ENCODE measurements at regions of chr3 and their contacts with region 1.

Region 1: GRCh38 chr3:100400780-100401673 is at the starts of genes LNP1 and TOMM70:
- DNase-seq: peak; percentile 96
- ATAC-seq: peak; percentile 92
- H3K4me3 ChIP-seq: peak within 1 kb of the TSS; percentile 74 to 95 (median 89)
- H3K4me3 Mint-ChIP-seq: peak within 1 kb of the TSS; percentile 95
- H3K27ac ChIP-seq: peak within 1 kb of the TSS; percentile 73 to 84
- H3K27ac Mint-ChIP-seq: peak within 1 kb of the TSS; percentile 93
- H3K4me1 ChIP-seq: peaks cover 18 to 22% of the 10 kb centered on the region in 2 donors
- H3K4me1 Mint-ChIP-seq: peaks cover 49% of the 10 kb centered on the region
- H3K27me3 ChIP-seq: no peaks in the 10 kb centered on the region
- H3K27me3 Mint-ChIP-seq: no peaks in the 10 kb centered on the region
- CTCF ChIP-seq: no peak
- total RNA-seq, gene LNP1: 1.6 and 1.9 TPM in 2 replicates
- total RNA-seq, gene TOMM70: 28.8 and 30.0 TPM in 2 replicates

Region 2: GRCh38 chr3:98593046-98593936 is 1807.7 kb before region 1 on chr3 and contains the start of gene CPOX:
- CTCF ChIA-PET with region 1: no interaction called
- POLR2A ChIA-PET with region 1: no interaction called
- intact Hi-C with region 1: loop called (anchors 5 kb)
- DNase-seq: peak; percentile 79
- ATAC-seq: peak; percentile 93
- H3K4me3 ChIP-seq: peak within 1 kb of the TSS; percentile 63 to 90 (median 69)
- H3K4me3 Mint-ChIP-seq: peak within 1 kb of the TSS; percentile 98
- H3K27ac ChIP-seq: peak within 1 kb of the TSS; percentile 60 to 76
- H3K27ac Mint-ChIP-seq: peak within 1 kb of the TSS; percentile 87
- H3K4me1 ChIP-seq: peaks cover 9 to 20% of the 10 kb centered on the region in 2 donors
- H3K4me1 Mint-ChIP-seq: peaks cover 26% of the 10 kb centered on the region
- H3K27me3 ChIP-seq: no peaks in the 10 kb centered on the region
- H3K27me3 Mint-ChIP-seq: no peaks in the 10 kb centered on the region
- CTCF ChIP-seq: no peak
- total RNA-seq, gene CPOX: 17.5 and 22.0 TPM in 2 replicates

Region 3: DNA sequence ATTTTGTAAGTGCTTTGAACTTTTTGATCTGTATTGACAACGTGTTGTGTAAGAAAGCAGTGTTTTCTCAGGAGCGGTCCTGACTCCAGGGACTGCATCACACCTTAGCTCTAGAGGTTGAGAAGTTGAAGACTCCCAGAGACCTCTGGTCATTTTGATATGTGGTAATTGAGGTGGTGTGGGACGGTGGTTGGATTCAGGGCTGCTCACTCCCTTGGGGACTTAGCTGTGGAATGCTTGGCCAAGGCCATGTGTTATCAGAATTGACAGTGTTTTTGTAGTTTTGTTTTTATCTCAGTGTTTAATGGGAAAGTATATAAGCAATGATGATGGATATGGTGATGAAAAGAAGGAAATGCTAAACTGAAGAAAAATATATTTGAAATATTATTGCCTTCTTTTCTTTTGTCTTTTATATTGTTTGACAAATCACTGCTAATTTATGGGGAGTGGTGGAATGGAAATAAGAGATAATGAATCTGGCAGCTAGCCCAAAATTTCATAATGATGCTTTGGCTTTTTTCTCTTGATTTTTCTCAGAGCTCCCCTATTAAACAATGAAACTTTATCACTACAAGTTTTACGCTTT is 567.3 kb before region 1 on chr3:
- CTCF ChIA-PET with region 1: interaction called, 7 read pairs
- POLR2A ChIA-PET with region 1: no interaction called
- intact Hi-C with region 1: loop called (anchors 5 kb)
- DNase-seq: no peak
- ATAC-seq: no peak
- H3K4me3 ChIP-seq: no peak overlapping the region
- H3K4me3 Mint-ChIP-seq: no peak overlapping the region
- H3K27ac ChIP-seq: no peak overlapping the region
- H3K27ac Mint-ChIP-seq: no peak overlapping the region
- H3K4me1 ChIP-seq: no peaks in the 10 kb centered on the region
- H3K4me1 Mint-ChIP-seq: no peaks in the 10 kb centered on the region
- H3K27me3 ChIP-seq: no peaks in the 10 kb centered on the region
- H3K27me3 Mint-ChIP-seq: no peaks in the 10 kb centered on the region
- CTCF ChIP-seq: no peak

Region 4: GRCh38 chr3:100047455-100048141 is 353.4 kb before region 1 on chr3:
- CTCF ChIA-PET with region 1: no interaction called
- POLR2A ChIA-PET with region 1: no interaction called
- intact Hi-C with region 1: loop called (anchors 1 kb)
- DNase-seq: peak; percentile 82
- ATAC-seq: peak; percentile 67
- H3K4me3 ChIP-seq: peak overlapping the region; percentile 16 to 47 (median 34)
- H3K4me3 Mint-ChIP-seq: peak overlapping the region; percentile 89
- H3K27ac ChIP-seq: peak overlapping the region; percentile 75 to 82
- H3K27ac Mint-ChIP-seq: peak overlapping the region; percentile 97
- H3K4me1 ChIP-seq: peaks cover 59 to 60% of the 10 kb centered on the region in 2 donors
- H3K4me1 Mint-ChIP-seq: peaks cover 63% of the 10 kb centered on the region
- H3K27me3 ChIP-seq: no peaks in the 10 kb centered on the region
- H3K27me3 Mint-ChIP-seq: no peaks in the 10 kb centered on the region
- CTCF ChIP-seq: no peak

Region 5: GRCh38 chr3:100334488-100335351 is 66.3 kb before region 1 on chr3 and contains the start of gene NIT2:
- CTCF ChIA-PET with region 1: interaction called, 3 read pairs
- POLR2A ChIA-PET with region 1: interaction called, 5 read pairs
- intact Hi-C with region 1: loop called (anchors 1 kb)
- DNase-seq: peak; percentile 88
- ATAC-seq: peak; percentile 98
- H3K4me3 ChIP-seq: peak within 1 kb of the TSS; percentile 54 to 82 (median 72)
- H3K4me3 Mint-ChIP-seq: peak within 1 kb of the TSS; percentile 96
- H3K27ac ChIP-seq: peak within 1 kb of the TSS; percentile 54 to 79
- H3K27ac Mint-ChIP-seq: peak within 1 kb of the TSS; percentile 91
- H3K4me1 ChIP-seq: peaks cover 5 to 16% of the 10 kb centered on the region in 2 donors
- H3K4me1 Mint-ChIP-seq: peaks cover 23% of the 10 kb centered on the region
- H3K27me3 ChIP-seq: no peaks in the 10 kb centered on the region
- H3K27me3 Mint-ChIP-seq: no peaks in the 10 kb centered on the region
- CTCF ChIP-seq: no peak
- total RNA-seq, gene NIT2: 34.4 and 36.5 TPM in 2 replicates

Region 6: GRCh38 chr3:100590114-100590839 is 189.2 kb after region 1 on chr3:
- CTCF ChIA-PET with region 1: interaction called, 5 read pairs
- POLR2A ChIA-PET with region 1: no interaction called
- intact Hi-C with region 1: loop called (anchors 5 kb)
- DNase-seq: peak; percentile 78
- ATAC-seq: peak; percentile 86
- H3K4me3 ChIP-seq: peak overlapping the region in 1 of 5 experiments; percentile 34
- H3K4me3 Mint-ChIP-seq: peak overlapping the region; percentile 5
- H3K27ac ChIP-seq: no peak overlapping the region
- H3K27ac Mint-ChIP-seq: no peak overlapping the region
- H3K4me1 ChIP-seq: peaks cover 0 to 5% of the 10 kb centered on the region in 2 donors
- H3K4me1 Mint-ChIP-seq: peaks cover 3% of the 10 kb centered on the region
- H3K27me3 ChIP-seq: no peaks in the 10 kb centered on the region
- H3K27me3 Mint-ChIP-seq: no peaks in the 10 kb centered on the region
- CTCF ChIP-seq: peak; percentile 92

Region 7: DNA sequence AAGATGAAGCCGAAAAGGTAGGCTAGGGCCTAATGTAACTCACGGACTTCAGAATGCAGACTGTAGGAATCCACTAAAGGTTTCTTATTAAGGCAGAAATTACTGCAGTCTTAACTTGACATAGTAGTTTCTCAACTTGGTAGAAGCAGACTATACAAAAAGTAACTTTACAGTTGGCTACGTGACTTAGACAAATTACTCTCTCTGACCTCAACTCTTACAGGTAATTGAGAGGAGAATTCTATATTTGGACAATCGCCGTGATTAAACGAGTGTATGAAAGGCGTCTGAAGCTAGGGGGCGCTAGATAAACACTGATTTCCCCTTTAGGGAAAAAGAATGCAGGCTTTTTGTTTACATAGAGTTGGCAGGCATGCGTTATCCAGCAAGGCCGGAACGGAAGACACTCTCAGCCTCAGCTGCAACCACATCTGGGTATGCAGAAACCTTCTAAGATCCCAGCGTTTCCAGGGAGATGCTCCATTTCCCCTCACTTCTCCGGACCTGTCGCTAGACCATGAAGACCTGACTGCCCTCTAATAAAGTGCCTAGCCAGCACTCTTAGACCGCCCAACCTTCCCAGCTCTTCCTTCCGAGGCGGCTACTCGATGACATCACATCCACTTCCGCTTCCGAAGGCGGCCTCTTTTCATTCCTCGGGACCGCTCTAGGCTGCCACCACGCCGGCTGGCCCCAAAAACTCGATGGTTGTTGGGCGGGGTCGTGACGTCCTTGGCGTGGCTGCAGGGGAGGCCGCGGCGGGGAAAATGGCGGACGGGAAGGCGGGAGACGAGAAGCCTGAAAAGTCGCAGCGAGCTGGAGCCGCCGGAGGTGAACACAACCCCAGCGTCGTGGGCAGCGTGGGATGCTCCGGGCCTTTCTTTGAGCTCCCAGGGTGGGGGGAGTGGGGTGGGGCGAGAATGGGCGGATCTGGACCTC is 1172.7 kb after region 1 on chr3 and contains the start of gene PCNP:
- CTCF ChIA-PET with region 1: no interaction called
- POLR2A ChIA-PET with region 1: interaction called, 4 read pairs
- intact Hi-C with region 1: loop called (anchors 1 kb)
- DNase-seq: peak; percentile 100
- ATAC-seq: peak; percentile 78
- H3K4me3 ChIP-seq: peak within 1 kb of the TSS; percentile 88 to 97 (median 91)
- H3K4me3 Mint-ChIP-seq: peak within 1 kb of the TSS; percentile 99
- H3K27ac ChIP-seq: peak within 1 kb of the TSS; percentile 98 to 99
- H3K27ac Mint-ChIP-seq: peak within 1 kb of the TSS; percentile 98
- H3K4me1 ChIP-seq: peaks cover 32 to 39% of the 10 kb centered on the region in 2 donors
- H3K4me1 Mint-ChIP-seq: peaks cover 46% of the 10 kb centered on the region
- H3K27me3 ChIP-seq: no peaks in the 10 kb centered on the region
- H3K27me3 Mint-ChIP-seq: no peaks in the 10 kb centered on the region
- CTCF ChIP-seq: peak; percentile 88
- total RNA-seq, gene PCNP: 156 and 157 TPM in 2 replicates

Measured in B cell (primary cell).